ENCODE measurements at regions of chr3 and their contacts with region 1.

Region 1: GRCh38 chr3:141360888-141361598 is 7.3 kb upstream of the ZBTB38 start:
- DNase-seq: peak; percentile 90
- H3K4me3 ChIP-seq: no peak overlapping the region
- H3K27me3 ChIP-seq: no peaks in the 10 kb centered on the region
- CTCF ChIP-seq: peak; percentile 75

Region 2: DNA sequence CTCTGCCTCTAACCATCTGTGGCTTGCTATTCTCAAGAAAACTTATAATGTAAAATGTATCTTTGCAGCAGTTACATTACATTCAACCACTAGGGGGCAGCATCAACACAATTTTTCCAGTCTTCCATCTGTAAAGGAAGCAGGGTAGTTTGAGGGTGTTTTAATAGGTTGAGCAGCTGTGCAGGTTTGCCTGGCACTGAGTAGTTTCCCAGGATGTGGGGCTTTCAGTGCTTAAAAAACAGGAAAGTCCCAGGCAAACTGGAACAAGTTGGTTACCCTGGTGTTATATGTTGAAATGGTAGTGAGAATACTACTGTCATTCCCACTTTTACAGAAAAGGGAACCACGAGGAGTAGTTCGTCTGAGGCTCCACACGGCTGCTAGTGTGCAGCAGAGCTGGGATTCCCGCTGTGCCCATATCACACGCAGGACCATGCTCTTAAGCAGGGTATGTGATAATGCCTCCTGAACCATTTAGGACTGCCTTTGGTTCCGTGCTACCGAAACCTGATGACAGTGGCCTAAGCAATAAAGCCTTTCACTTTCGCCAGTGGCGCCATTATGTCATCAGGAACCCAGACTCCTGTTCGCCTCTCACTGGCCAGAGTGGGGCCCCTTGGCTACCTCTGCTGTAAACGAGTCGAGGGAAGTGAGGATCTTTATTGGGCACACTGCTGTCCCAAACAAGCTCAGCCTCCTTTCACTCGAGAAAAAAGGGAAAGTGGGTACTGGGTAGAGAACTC is 57.4 kb before region 1 on chr3:
- CTCF ChIA-PET with region 1: interaction called, 12 read pairs
- POLR2A ChIA-PET with region 1: no interaction called
- DNase-seq: peak; percentile 44
- H3K4me3 ChIP-seq: no peak overlapping the region
- H3K27me3 ChIP-seq: no peaks in the 10 kb centered on the region
- CTCF ChIP-seq: peak; percentile 68

Region 3: GRCh38 chr3:141346418-141346817 is 14.6 kb before region 1 on chr3:
- CTCF ChIA-PET with region 1: interaction called, 20 read pairs
- POLR2A ChIA-PET with region 1: no interaction called
- DNase-seq: no peak
- H3K4me3 ChIP-seq: no peak overlapping the region
- H3K27me3 ChIP-seq: no peaks in the 10 kb centered on the region
- CTCF ChIP-seq: no peak

Region 4: GRCh38 chr3:141407047-141407446 is 46.0 kb after region 1 on chr3:
- CTCF ChIA-PET with region 1: interaction called, 18 read pairs
- POLR2A ChIA-PET with region 1: interaction called, 11 read pairs
- DNase-seq: peak; percentile 86
- H3K4me3 ChIP-seq: no peak overlapping the region
- H3K27me3 ChIP-seq: no peaks in the 10 kb centered on the region
- CTCF ChIP-seq: no peak

Region 5: GRCh38 chr3:141441381-141442364 is 80.6 kb after region 1 on chr3:
- CTCF ChIA-PET with region 1: interaction called, 28 read pairs
- POLR2A ChIA-PET with region 1: no interaction called
- DNase-seq: no peak
- H3K4me3 ChIP-seq: no peak overlapping the region
- H3K27me3 ChIP-seq: no peaks in the 10 kb centered on the region
- CTCF ChIP-seq: peak; percentile 82